ENCODE measurements at regions of chr10 and their contacts with region 1.

Region 1: DNA sequence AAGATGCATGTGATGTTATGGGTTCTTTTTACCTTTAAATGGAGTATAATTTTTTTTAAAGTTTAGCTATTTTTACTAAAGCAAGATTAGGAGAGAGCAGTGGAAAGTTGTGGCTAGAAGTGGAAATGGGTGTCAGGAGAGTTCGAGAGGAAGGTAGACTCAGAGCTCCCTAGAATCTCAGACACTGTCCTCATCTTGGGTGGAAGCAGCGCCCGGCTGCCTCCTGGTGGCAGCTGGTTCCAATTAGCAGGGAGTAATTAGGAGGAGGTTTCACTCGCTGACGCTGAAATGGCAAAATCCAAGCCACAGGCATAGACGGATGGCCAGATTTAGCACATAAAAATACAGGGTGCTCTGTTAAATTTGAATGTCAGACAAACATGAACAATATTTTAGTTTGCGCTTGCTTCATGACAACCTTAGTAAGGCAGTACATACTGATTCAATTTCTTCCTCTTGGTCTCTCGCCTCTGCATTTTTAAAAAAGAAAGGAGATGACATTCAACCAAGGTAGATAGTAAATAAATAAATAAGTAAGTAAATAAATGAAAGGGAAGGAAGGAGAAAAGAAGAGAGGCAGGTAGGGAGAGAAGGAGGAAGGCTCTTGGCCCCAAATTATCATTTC is 58.5 kb downstream of the LGI1 start:
- DNase-seq: peak; percentile 44 to 94 (median 72)

Region 2: GRCh38 chr10:93751832-93752231 is 64.4 kb before region 1 on chr10:
- intact Hi-C with region 1: loop called (anchors 10 kb)
- DNase-seq: peak in 7 of 10 donors; percentile 35 to 86 (median 56)